Activated CD8-positive, alpha-beta T cell treated with anti-CD3 and anti-CD28 coated beads, Interleukin-2, amount 10 ng/mL, durations not matched to agents 7 days and 5 days (primary cell): ENCODE measurements at regions of chr15 and their contacts with region 1.

Region 1: DNA sequence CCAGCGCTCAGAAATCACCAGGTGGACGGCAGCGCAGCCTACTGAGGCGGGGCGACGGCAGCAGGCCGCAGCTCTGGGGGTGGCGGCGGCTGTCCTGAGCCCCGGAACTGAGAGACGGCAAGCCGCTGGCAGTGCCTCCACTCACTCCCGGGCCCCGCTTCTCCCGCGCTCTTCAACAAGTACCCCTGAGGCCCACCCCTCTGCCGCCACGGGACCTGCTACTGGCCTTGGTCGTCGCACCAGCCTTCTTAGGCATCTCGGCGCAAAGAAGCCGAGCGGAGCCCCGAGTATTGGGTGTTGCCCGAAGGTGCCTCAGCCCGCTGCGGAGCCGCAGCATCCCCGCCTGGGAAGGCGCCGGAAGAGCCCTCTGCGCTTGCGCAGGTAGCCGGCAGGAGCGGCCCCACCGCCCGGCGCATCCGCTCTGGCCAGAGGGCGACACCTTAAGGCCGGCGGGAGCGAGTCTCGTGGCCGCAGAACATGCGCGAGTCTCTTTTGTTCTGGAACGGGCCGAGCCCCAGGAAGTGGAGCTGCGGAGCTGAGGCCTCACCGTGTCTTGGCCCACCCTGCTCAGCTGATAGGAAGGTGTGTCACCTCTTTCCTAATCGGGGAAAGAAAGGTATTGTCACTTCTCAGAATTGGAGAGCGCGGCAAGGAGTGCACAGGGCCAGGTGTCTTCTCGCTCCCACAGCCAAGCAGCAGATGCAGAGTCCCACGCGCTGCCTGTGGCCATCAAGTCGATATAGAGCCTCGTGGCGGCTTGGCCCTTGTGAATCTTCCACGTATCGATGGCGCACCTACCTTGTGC is at the start of gene C15orf40:
- DNase-seq: peak; percentile 88
- ATAC-seq: peak; percentile 89
- H3K4me3 Mint-ChIP-seq: peak within 1 kb of the TSS; percentile 87
- H3K27ac Mint-ChIP-seq: peak within 1 kb of the TSS; percentile 90
- H3K4me1 Mint-ChIP-seq: peaks cover 50% of the 10 kb centered on the region
- H3K27me3 Mint-ChIP-seq: no peaks in the 10 kb centered on the region
- total RNA-seq, gene C15orf40: 25.2 to 31.0 TPM

Region 2: DNA sequence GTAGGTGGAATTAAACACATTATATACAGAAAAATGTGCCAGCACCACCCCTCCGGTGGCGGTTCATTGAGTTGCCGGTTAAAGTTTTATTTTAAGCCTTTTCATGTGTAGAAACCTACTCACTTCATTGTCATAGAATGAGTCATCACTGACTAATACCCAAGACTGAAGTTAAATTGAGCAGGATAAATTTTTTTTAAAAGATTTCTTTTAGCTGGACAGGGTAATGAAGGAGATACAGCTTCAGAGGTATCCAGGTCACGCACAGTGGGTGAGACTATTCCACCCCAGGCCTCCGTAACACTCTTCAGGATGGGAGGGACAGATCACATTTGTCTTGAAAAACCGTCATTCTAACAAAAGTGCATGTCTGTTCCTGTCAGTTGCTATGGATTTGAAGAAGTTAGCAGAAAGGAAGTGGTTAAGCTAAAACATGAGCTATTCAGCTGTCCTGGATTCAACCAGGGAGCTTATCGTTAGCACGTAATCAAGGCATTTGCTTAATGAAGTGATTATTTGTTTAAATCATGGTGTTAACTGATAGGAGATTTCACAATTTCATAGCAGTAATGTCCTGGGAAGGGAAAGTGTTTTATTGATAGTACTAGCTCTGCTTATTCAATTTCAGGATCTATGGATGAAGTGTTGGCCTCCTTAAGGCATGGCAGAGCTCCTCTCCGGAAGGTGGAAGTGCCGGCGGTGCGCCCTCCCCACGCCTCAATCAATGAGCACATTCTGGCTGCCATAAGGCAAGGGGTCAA is 178.7 kb before region 1 on chr15:
- CTCF ChIA-PET with region 1: interaction called, 10 read pairs
- POLR2A ChIA-PET with region 1: no interaction called
- DNase-seq: peak; percentile 38
- ATAC-seq: peak; percentile 55
- H3K4me3 Mint-ChIP-seq: peak overlapping the region; percentile 12
- H3K27ac Mint-ChIP-seq: peak overlapping the region; percentile 86
- H3K4me1 Mint-ChIP-seq: peaks cover 27% of the 10 kb centered on the region
- H3K27me3 Mint-ChIP-seq: no peaks in the 10 kb centered on the region

Region 3: DNA sequence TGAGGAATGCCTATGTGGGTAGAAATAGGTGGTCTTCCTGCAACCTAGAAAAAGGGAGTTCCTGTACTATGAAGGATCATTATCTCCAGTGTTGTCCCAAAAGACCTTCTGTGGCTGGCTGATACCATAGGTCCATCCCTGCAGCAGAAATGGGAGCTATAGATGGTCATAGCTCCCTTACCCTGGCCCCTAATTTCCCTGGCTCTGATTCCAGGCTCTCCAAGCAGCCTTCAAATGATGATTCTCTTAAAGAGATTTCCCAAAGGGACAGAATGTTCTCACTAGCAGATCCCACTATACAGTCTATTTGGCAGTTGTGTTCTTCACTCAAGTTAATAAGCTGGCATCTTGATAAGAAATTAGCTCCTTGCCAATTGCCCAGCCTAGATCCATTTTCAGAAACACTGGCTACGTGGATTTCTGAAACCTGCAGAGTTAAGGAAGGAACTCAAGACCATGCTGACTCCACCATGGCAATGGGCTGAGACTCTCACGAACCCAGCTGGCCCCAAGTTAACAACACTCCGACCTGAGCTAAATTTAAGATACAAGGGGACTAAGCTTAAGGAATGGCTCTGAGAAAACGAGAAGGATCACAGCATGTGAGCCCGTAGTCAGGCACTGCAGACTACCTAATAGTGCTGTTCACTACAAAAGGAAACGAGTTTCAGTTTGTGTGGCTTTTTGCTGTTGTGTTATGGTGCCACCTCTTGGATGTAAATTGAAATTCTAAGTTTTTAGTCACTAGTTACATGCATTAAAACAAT is 11.4 kb before region 1 on chr15:
- CTCF ChIA-PET with region 1: interaction called, 36 read pairs
- POLR2A ChIA-PET with region 1: interaction called, 6 read pairs
- DNase-seq: peak; percentile 63
- ATAC-seq: peak; percentile 93
- H3K4me3 Mint-ChIP-seq: peak overlapping the region; percentile 64
- H3K27ac Mint-ChIP-seq: peak overlapping the region; percentile 77
- H3K4me1 Mint-ChIP-seq: peaks cover 8% of the 10 kb centered on the region
- H3K27me3 Mint-ChIP-seq: no peaks in the 10 kb centered on the region

Region 4: GRCh38 chr15:83066734-83067637 is 55.5 kb after region 1 on chr15 and contains the start of gene BTBD1:
- CTCF ChIA-PET with region 1: interaction called, 22 read pairs
- POLR2A ChIA-PET with region 1: interaction called, 17 read pairs
- DNase-seq: peak; percentile 87
- ATAC-seq: peak; percentile 87
- H3K4me3 Mint-ChIP-seq: no peak within 1 kb of the TSS
- H3K27ac Mint-ChIP-seq: peak within 1 kb of the TSS; percentile 84
- H3K4me1 Mint-ChIP-seq: peaks cover 27% of the 10 kb centered on the region
- H3K27me3 Mint-ChIP-seq: no peaks in the 10 kb centered on the region
- total RNA-seq, gene BTBD1: 67.4 to 70.9 TPM

Region 5: GRCh38 chr15:83292317-83292716 is 280.8 kb after region 1 on chr15:
- CTCF ChIA-PET with region 1: no interaction called
- POLR2A ChIA-PET with region 1: no interaction called
- DNase-seq: no peak
- ATAC-seq: no peak
- H3K4me3 Mint-ChIP-seq: no peak overlapping the region
- H3K27ac Mint-ChIP-seq: no peak overlapping the region
- H3K4me1 Mint-ChIP-seq: no peaks in the 10 kb centered on the region
- H3K27me3 Mint-ChIP-seq: peaks cover 43% of the 10 kb centered on the region